ENCODE measurements at regions of chr9 and their contacts with region 1.

Region 1: DNA sequence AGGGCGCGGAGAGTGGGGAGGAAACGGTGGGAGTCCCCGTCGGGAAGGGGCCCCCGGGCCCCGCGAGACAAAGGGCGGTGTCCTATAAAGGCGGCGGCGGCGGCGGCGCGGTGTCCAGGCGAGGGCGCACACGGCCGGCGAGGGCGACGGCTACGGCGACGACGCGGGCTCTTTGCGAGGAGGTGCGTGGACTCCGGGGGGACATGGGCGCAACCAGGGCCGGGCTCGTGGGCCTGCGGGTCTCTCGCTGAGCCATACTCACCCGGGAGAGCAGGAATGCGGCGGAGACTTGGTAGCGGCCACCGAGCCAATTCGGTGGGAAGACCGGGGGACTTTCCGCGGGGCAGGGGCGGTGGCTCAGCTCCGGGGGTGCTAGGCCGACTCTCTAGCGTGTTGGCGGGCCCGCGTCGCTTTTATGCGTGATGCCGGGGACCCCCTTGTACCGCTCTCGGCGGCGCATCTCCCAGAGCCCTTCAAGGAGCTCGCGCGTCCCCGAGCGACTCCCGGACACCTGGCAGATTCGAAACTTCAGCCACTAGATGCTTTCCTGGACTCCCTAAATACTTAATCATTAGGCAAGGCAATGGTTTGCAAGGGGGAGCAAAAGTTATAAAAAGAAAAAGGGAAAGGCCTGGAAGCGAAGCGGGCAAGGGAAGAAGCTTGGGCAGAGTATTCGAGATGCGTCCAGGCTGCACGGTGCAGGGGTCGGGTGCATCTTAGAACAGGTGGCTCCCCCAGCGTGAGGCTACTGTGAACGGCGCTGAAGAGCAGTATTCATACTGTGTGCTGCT is 5.9 kb upstream of the TAL2 start:
- DNase-seq: peak; percentile 19 to 39
- ATAC-seq: peak; percentile 77 to 86
- H3K4me3 ChIP-seq: peak overlapping the region; percentile 63 to 94 (median 68)
- H3K27ac ChIP-seq: peak overlapping the region; percentile 75 to 79 (median 76)
- H3K4me1 ChIP-seq: peaks cover 19 to 24% of the 10 kb centered on the region in 2 donors
- H3K27me3 ChIP-seq: no peaks in the 10 kb centered on the region
- CTCF ChIP-seq: peak; percentile 45 to 74 (median 62)
- POLR2A ChIP-seq: no peak

Region 2: GRCh38 chr9:105296889-105297288 is 359.4 kb before region 1 on chr9:
- in situ Hi-C with region 1: no loop called
- intact Hi-C with region 1: no loop called
- DNase-seq: no peak
- ATAC-seq: peak in 1 of 2 donors; percentile 81
- H3K4me3 ChIP-seq: no peak overlapping the region
- H3K27ac ChIP-seq: no peak overlapping the region
- H3K4me1 ChIP-seq: peaks cover 0 to 3% of the 10 kb centered on the region in 2 donors
- H3K27me3 ChIP-seq: no peaks in the 10 kb centered on the region
- CTCF ChIP-seq: no peak
- POLR2A ChIP-seq: no peak

Region 3: DNA sequence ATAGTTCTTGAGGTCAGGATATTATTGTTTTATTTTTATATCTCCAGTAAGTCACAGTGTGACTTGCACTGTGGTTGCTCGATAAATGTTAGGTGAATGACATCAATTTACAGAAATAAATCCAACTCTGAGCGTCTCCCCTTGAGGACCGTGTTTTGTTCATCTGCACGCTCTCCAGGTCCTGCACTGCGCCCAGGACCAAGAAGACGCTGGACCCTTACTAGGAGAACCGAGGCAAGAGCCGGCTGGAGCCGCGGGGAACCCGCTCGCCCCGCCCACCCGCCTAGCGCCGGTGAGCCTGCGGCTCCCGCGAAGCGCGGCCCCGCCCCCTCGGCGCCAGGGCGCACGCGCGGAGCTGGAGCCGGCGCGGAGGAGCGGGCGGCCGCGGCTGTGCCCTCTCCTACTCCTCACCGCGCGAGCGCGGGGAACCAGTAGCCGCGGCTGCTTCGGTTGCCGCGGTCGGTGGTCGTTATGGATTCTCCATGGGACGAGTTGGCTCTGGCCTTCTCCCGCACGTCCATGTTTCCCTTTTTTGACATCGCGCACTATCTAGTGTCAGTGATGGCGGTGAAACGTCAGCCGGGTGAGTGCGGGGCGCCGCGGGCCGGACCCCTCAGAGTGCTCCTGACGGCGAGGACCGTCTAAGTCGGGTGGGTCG is 38.0 kb after region 1 on chr9 and contains the start of gene TMEM38B:
- in situ Hi-C with region 1: no loop called
- intact Hi-C with region 1: no loop called
- DNase-seq: peak; percentile 78 to 87
- ATAC-seq: peak; percentile 64 to 65
- H3K4me3 ChIP-seq: peak within 1 kb of the TSS; percentile 73 to 91 (median 82)
- H3K27ac ChIP-seq: peak within 1 kb of the TSS; percentile 93 to 99 (median 96)
- H3K4me1 ChIP-seq: peaks cover 48 to 58% of the 10 kb centered on the region in 2 donors
- H3K27me3 ChIP-seq: no peaks in the 10 kb centered on the region
- CTCF ChIP-seq: no peak
- POLR2A ChIP-seq: peak; percentile 97 to 99
- total RNA-seq, gene TMEM38B: 81.4 to 97.6 (median 89.8) TPM

Region 4: GRCh38 chr9:105713260-105714019 is 57.1 kb after region 1 on chr9:
- in situ Hi-C with region 1: no loop called
- intact Hi-C with region 1: loop called (anchors 1 kb)
- DNase-seq: no peak
- ATAC-seq: no peak
- H3K4me3 ChIP-seq: no peak overlapping the region
- H3K27ac ChIP-seq: peak overlapping the region in 2 of 4 donors; percentile 82 to 83
- H3K4me1 ChIP-seq: peaks cover 38 to 48% of the 10 kb centered on the region in 2 donors
- H3K27me3 ChIP-seq: no peaks in the 10 kb centered on the region
- CTCF ChIP-seq: no peak
- POLR2A ChIP-seq: no peak

Region 5: DNA sequence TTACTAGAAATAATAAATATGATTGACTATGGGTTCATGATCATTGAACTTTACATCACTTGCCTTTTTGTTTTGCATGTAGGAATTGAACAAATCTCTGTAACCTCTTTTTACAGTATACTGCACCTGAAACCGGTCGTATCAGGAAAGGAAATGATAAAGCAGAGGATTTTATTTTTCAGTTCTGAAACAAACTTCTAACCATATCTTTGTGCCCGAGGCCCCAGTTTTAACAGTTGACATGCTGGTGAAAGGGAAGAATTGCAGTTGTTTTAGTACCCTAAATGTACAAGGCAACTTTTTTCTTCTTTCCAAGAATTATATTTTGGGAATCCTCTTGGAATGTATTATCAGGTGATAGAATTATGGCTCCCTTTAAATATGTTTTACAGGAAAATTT is 65.8 kb after region 1 on chr9:
- in situ Hi-C with region 1: loop called in 3 of 4 experiments (anchors 5 to 10 kb)
- intact Hi-C with region 1: loop called (anchors 1 kb)
- DNase-seq: no peak
- ATAC-seq: no peak
- H3K4me3 ChIP-seq: no peak overlapping the region
- H3K27ac ChIP-seq: no peak overlapping the region
- H3K4me1 ChIP-seq: peaks cover 11 to 20% of the 10 kb centered on the region in 2 donors
- H3K27me3 ChIP-seq: no peaks in the 10 kb centered on the region
- CTCF ChIP-seq: no peak
- POLR2A ChIP-seq: no peak

Region 6: DNA sequence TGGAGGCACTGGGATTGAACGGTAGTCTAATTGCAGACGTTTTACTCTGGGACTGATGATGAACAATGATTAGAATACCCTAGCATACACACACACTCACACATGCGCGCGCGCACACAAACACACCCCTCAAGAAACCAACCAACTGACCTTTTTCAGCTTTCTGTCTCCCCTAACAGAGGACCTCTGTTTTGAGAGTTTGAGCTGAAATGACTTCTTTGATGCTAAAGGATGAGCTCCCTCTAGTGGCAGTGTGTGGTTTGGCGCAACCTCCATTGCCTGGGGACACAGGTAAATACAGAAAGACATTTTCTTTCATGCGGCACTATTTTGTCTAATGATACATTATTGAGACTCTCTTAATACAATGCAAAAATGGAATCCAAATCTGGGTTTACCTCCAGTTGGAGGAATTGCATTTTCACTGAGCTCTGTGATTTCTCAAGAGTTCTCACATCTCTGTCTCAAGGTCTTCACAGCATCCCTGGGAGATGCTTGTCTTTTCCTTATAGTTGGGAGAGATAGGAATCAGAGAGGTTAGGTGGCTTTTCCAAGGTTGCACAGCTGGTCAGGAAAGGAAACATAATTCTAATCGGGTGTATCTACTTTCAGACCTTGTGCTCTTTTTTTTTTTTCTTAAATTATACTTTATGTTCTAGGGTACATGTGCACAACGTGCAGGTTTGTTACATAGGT is 225.5 kb after region 1 on chr9:
- in situ Hi-C with region 1: loop called in 1 of 4 experiments (anchors 25 kb)
- intact Hi-C with region 1: loop called (anchors 1 kb)
- DNase-seq: peak; percentile 21 to 61
- ATAC-seq: peak; percentile 61 to 79
- H3K4me3 ChIP-seq: no peak overlapping the region
- H3K27ac ChIP-seq: no peak overlapping the region
- H3K4me1 ChIP-seq: no peaks in the 10 kb centered on the region
- H3K27me3 ChIP-seq: no peaks in the 10 kb centered on the region
- CTCF ChIP-seq: peak; percentile 74 to 87 (median 75)
- POLR2A ChIP-seq: no peak